ENCODE measurements at regions of chr5 and their contacts with region 1.

Region 1: DNA sequence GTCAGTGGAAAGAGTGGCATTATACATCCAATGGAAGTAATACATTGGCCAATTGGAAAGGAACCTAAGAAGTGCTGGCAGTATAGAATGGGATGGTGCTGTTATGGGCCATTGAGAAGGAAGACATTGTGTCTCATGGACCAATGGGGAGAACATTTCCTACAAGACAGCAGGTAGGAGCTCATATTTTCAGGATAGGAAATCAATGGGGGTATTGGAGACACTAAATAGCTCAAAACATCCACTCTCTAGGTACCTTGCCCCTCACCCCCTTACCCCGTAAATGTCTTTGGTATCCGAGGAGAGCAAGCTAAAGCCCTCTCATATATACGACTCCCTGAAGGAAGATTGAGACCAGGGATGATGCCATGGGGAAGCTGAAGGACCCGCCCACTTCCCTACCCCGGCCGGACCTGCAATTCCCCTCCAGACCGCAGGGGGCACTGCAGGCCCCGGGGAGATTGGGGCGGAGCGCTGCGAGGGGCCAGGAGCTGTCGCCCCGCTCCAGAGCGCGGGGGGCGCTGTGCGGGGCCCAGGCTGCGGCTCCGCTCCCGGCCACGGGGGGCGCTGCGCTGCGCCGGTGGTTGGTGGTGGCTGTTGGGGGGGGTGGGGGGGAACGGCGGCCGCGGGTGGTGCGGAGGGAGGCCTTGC is at the start of gene KDM3B:
- DNase-seq: peak; percentile 82 to 100 (median 96)
- ATAC-seq: peak; percentile 96
- H3K4me3 ChIP-seq: peak within 1 kb of the TSS; percentile 93
- H3K4me3 Mint-ChIP-seq: peak within 1 kb of the TSS; percentile 88 to 98 (median 96)
- H3K27ac ChIP-seq: peak within 1 kb of the TSS; percentile 91
- H3K27ac Mint-ChIP-seq: peak within 1 kb of the TSS; percentile 90 to 98 (median 96)
- H3K4me1 ChIP-seq: peaks cover 18 to 32% of the 10 kb centered on the region in 2 donors
- H3K4me1 Mint-ChIP-seq: peaks cover 30 to 54% (median 48%) of the 10 kb centered on the region in 7 donors
- H3K27me3 ChIP-seq: no peaks in the 10 kb centered on the region
- H3K27me3 Mint-ChIP-seq: no peaks in the 10 kb centered on the region
- total RNA-seq, gene KDM3B: 67.7 to 90.2 (median 82.8) TPM

Region 2: DNA sequence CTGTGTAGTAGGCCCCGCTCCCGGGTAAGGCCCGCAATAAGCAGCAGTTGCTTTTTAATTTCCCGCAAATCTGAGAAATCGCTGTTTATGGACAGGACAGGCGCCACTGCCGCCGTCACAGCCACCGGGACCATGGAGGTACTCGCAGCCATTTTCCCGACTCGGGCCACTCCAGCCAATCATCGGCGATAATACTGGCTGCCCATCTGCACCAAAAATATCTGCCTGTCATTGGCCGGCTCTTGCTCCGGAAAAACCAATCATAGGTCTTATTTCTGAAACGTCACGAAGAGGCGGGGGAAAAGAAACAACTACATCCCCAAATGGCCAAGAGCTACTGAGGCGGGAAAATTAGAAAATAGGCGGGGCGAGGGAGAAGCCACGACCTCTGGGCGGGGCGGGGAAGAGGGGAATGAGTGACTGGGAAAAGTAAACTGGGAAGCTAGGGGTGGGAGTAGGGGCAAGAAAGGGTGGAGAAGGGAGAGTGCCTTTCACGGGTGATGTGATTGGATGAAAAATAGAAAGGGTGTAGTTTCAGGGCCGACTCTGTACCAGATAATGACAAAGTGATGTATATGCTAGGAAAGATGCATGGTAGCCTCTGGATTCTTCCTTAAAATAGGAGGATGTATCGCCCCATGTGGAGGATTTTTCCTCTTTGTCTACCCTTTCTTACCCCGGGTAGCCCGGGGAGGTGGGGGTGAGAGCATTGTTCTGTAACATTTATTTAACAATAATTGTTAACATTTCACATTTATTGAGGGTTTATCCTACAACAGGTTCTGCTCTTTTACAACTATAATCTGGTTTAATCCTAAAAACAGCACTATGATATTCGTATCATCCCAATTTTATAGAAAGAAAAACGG is 138.8 kb before region 1 on chr5 and contains the start of gene CDC23:
- CTCF ChIA-PET with region 1: interaction called, 3 read pairs
- POLR2A ChIA-PET with region 1: interaction called, 5 read pairs
- intact Hi-C with region 1: loop called (anchors 1 kb)
- DNase-seq: peak; percentile 65 to 95 (median 92)
- ATAC-seq: peak; percentile 98
- H3K4me3 ChIP-seq: peak within 1 kb of the TSS; percentile 97
- H3K4me3 Mint-ChIP-seq: peak within 1 kb of the TSS; percentile 92 to 99 (median 98)
- H3K27ac ChIP-seq: peak within 1 kb of the TSS; percentile 91
- H3K27ac Mint-ChIP-seq: peak within 1 kb of the TSS; percentile 95 to 98 (median 96)
- H3K4me1 ChIP-seq: peaks cover 0 to 8% of the 10 kb centered on the region in 2 donors
- H3K4me1 Mint-ChIP-seq: peaks cover 14 to 32% (median 27%) of the 10 kb centered on the region in 7 donors
- H3K27me3 ChIP-seq: no peaks in the 10 kb centered on the region
- H3K27me3 Mint-ChIP-seq: no peaks in the 10 kb centered on the region
- total RNA-seq, gene CDC23: 13.0 to 39.6 (median 25.5) TPM

Region 3: DNA sequence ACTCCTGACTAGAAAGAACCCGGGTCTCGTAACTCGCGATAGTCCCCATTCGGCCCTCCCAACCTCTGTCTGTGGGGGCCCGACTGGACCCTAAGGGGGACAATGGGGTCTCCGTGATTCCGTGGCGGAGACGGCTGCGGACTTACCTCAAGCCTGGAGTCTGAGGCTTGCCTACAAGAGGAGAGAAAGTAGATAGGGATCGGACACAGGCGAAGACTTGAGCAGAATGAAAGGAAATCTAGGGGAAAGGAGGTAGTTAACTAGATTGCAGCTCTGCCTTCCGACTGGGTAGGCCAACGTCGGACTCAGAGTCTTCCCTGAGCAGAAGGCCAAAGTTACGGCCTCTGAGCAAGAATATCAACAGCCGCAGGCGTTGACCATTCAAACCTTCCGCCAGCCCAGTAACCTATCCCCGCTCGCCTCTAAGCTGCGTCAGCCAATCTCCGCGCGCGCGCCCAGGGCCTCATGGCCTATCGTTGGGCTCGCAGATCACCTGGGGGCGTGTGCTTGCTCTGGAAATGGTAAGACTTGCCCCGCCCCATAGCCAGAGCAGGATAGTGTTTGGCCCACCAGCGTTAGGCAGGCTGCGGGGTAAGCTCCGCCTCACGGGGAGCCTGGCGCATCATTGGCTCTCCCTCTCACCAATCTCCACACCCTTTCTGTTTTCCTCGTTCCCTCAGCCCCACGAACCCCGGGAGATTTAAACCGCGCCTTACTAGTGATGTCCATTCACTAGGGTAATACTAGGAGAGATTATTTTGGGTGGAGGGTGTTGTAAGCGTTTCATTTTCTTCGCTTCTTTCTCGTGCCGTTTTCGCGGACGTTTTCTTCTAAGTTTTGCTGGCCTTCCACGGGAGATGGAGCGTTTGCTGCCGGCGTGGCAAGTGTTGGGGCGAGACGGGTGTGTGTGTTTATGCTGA is 20.5 kb before region 1 on chr5 and contains the start of gene CDC25C:
- CTCF ChIA-PET with region 1: interaction called, 117 read pairs
- POLR2A ChIA-PET with region 1: interaction called, 343 read pairs
- intact Hi-C with region 1: loop called (anchors 1 kb)
- DNase-seq: peak; percentile 87 to 98 (median 96)
- ATAC-seq: peak; percentile 100
- H3K4me3 ChIP-seq: peak within 1 kb of the TSS; percentile 85
- H3K4me3 Mint-ChIP-seq: peak within 1 kb of the TSS; percentile 83 to 95 (median 86)
- H3K27ac ChIP-seq: peak within 1 kb of the TSS; percentile 49
- H3K27ac Mint-ChIP-seq: peak within 1 kb of the TSS; percentile 48 to 92 (median 68)
- H3K4me1 ChIP-seq: peaks cover 1 to 7% of the 10 kb centered on the region in 2 donors
- H3K4me1 Mint-ChIP-seq: peaks cover 7 to 35% (median 14%) of the 10 kb centered on the region in 7 donors
- H3K27me3 ChIP-seq: no peaks in the 10 kb centered on the region
- H3K27me3 Mint-ChIP-seq: no peaks in the 10 kb centered on the region
- total RNA-seq, gene CDC25C: 9.8 TPM in 1 of 5 experiments, not detected in the others

Region 4: DNA sequence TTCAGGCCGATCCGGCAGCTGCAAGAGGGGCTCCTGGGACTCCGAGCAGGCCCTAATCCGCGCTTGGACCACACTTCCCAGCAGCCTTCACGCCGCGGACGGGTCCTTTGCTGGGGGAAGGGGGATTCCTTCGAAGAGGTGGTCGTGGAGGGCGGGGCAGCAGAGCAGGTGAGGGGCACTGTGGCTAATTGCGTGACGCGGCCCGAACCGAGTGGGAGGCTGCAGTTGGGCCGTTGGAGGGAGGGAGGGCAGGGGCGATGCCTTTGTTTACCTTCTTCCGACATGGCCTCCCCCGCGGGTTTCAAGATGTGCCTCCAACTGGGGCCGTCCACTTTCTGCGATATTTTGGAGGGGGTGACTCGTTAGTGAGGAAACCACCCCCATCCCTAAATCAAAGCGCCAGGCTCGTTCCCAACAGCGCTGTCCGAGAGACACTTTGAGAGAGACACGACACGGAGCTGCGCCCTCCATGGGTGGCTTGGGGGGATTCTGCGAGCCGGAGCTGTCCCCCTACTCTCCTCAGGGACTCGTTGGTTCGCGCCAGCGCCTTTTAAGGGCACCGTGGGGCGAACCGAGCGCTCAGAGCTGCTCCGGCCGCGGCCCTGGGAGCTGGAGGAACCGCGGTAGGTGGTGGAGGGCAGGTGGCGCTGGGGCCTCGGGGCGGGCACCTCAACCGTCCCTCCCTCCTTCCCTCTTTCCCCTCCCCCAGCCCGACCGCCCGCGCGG is 14.3 kb before region 1 on chr5 and contains the start of gene FAM53C:
- CTCF ChIA-PET with region 1: interaction called, 117 read pairs
- POLR2A ChIA-PET with region 1: interaction called, 343 read pairs
- intact Hi-C with region 1: loop called (anchors 1 kb)
- DNase-seq: peak; percentile 87 to 98 (median 93)
- ATAC-seq: peak; percentile 91
- H3K4me3 ChIP-seq: peak within 1 kb of the TSS; percentile 86
- H3K4me3 Mint-ChIP-seq: peak within 1 kb of the TSS; percentile 77 to 98 (median 94)
- H3K27ac ChIP-seq: peak within 1 kb of the TSS; percentile 95
- H3K27ac Mint-ChIP-seq: peak within 1 kb of the TSS; percentile 96 to 100 (median 99)
- H3K4me1 ChIP-seq: peaks cover 17 to 25% of the 10 kb centered on the region in 2 donors
- H3K4me1 Mint-ChIP-seq: peaks cover 16 to 42% (median 39%) of the 10 kb centered on the region in 7 donors
- H3K27me3 ChIP-seq: no peaks in the 10 kb centered on the region
- H3K27me3 Mint-ChIP-seq: no peaks in the 10 kb centered on the region
- total RNA-seq, gene FAM53C: 25.0 to 71.8 (median 27.7) TPM

Region 5: GRCh38 chr5:138369706-138370105 is 17.5 kb after region 1 on chr5:
- CTCF ChIA-PET with region 1: interaction called, 5 read pairs
- POLR2A ChIA-PET with region 1: interaction called, 12 read pairs
- intact Hi-C with region 1: loop called in 1 of 2 experiments (anchors 2 kb)
- DNase-seq: no peak
- ATAC-seq: peak; percentile 72
- H3K4me3 ChIP-seq: no peak overlapping the region
- H3K4me3 Mint-ChIP-seq: peak overlapping the region in 6 of 10 donors; percentile 14 to 55 (median 28)
- H3K27ac ChIP-seq: no peak overlapping the region
- H3K27ac Mint-ChIP-seq: peak overlapping the region in 6 of 9 donors; percentile 6 to 81 (median 45)
- H3K4me1 ChIP-seq: peaks cover 0 to 19% of the 10 kb centered on the region in 2 donors
- H3K4me1 Mint-ChIP-seq: peaks cover 20 to 51% (median 43%) of the 10 kb centered on the region in 7 donors
- H3K27me3 ChIP-seq: no peaks in the 10 kb centered on the region
- H3K27me3 Mint-ChIP-seq: no peaks in the 10 kb centered on the region

Region 6: DNA sequence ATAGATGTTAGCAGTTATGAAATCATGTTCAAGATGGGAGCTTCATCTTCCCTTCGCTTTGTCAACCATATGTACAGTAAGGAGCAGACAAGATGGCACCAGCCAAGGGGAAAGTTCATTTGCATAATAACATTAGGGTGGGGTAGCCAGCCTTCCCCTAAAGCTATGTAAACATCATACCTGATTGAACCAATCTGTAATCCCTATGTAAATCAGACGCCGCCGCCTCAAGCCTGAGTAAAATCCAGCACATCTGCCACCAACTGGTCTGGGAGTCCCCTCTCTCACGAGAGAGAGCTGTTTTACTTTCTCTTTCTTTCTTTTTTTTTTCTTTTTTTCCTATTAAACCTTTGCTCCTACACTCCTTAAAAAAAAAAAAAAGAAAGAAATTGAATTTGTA is 55.8 kb after region 1 on chr5:
- CTCF ChIA-PET with region 1: no interaction called
- POLR2A ChIA-PET with region 1: no interaction called
- intact Hi-C with region 1: loop called in 1 of 2 experiments (anchors 5 kb)
- DNase-seq: no peak
- ATAC-seq: peak; percentile 26
- H3K4me3 ChIP-seq: no peak overlapping the region
- H3K4me3 Mint-ChIP-seq: no peak overlapping the region
- H3K27ac ChIP-seq: no peak overlapping the region
- H3K27ac Mint-ChIP-seq: peak overlapping the region in 4 of 9 donors; percentile 0 to 43 (median 23)
- H3K4me1 ChIP-seq: no peaks in the 10 kb centered on the region
- H3K4me1 Mint-ChIP-seq: peaks cover 0 to 15% (median 0%) of the 10 kb centered on the region in 7 donors
- H3K27me3 ChIP-seq: no peaks in the 10 kb centered on the region
- H3K27me3 Mint-ChIP-seq: no peaks in the 10 kb centered on the region

Region 7: DNA sequence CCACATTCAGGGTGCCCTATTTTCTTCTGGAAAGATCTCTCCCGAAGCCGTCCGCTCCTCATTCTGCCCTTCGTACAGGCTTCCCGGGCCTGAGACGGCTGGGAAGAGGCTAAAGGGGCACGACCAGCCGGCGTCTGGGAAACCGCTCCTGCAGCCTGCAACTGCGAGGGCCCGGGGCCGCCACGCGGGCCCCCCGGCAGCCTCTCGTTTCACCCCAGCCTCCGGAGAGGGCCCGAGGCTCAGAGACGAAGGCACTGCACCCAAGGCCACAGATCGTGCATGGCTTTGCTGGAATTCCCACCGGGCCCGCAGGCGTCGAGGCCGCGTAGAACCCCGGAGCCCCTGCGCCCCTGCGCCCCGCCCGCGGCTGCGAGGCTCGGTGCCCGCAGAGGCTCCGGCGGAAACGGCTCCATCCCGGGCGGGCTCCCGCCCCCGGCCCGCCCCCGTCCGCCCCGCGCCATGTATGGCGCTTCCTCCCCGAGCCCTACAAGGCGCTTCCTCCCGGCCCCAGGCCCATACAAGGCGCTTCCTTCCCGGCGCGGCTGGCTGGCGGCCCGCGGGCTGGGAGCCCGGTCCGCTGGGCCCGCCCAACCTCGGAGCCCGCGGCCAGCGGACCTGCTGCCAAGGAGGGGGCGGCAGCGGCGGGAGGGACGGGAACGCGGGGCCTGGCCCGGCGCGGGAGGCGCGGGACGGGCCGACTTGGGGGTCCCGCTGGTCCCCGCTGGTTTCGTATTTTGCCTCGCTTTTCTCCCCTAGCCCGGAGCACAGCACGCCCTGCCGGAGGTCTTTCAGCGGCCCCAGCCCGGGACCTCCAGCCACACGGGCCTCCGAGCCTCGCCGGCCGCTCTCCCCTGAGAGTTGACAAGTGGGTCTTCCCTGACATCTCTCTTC is 139.7 kb after region 1 on chr5:
- CTCF ChIA-PET with region 1: no interaction called
- POLR2A ChIA-PET with region 1: no interaction called
- intact Hi-C with region 1: loop called (anchors 1 kb)
- DNase-seq: peak; percentile 66 to 87 (median 81)
- ATAC-seq: peak; percentile 99
- H3K4me3 ChIP-seq: peak overlapping the region; percentile 69
- H3K4me3 Mint-ChIP-seq: peak overlapping the region; percentile 76 to 97 (median 92)
- H3K27ac ChIP-seq: peak overlapping the region; percentile 37
- H3K27ac Mint-ChIP-seq: peak overlapping the region in 7 of 9 donors; percentile 40 to 90 (median 67)
- H3K4me1 ChIP-seq: peaks cover 13 to 14% of the 10 kb centered on the region in 2 donors
- H3K4me1 Mint-ChIP-seq: peaks cover 8 to 21% (median 13%) of the 10 kb centered on the region in 7 donors
- H3K27me3 ChIP-seq: peaks cover 0 to 6% of the 10 kb centered on the region in 2 donors
- H3K27me3 Mint-ChIP-seq: peaks cover 0 to 38% (median 5%) of the 10 kb centered on the region in 5 donors

Measured in naive thymus-derived CD4-positive, alpha-beta T cell (primary cell).